ENCODE measurements at regions of chr21 and their contacts with region 1.

Region 1: DNA sequence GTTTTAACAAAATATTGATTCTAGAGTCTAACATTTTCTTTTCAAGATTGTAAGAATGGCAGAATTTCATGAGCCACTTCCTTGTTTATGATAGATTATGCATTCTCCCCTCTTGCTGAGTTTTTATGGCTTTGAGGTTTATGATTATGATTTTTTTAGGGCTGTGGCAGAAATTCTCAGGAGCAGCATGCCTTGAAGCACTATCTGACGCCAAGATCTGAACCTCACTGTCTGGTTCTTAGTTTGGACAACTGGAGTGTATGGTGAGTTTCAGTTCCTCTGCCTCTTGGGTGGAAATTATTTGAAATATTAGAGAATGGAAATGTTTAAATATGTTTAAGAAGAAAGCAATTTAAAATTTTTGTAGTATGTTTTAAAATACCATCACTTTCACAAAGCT is 10.2 kb downstream of the USP16 start:
- DNase-seq: no peak
- H3K4me3 ChIP-seq: no peak overlapping the region
- H3K27ac ChIP-seq: peak overlapping the region in 1 of 8 donors; percentile 4
- H3K4me1 ChIP-seq: peaks cover 0 to 18% (median 3%) of the 10 kb centered on the region in 6 donors
- H3K27me3 ChIP-seq: no peaks in the 10 kb centered on the region
- CTCF ChIP-seq: no peak
- POLR2A ChIP-seq: no peak

Region 2: DNA sequence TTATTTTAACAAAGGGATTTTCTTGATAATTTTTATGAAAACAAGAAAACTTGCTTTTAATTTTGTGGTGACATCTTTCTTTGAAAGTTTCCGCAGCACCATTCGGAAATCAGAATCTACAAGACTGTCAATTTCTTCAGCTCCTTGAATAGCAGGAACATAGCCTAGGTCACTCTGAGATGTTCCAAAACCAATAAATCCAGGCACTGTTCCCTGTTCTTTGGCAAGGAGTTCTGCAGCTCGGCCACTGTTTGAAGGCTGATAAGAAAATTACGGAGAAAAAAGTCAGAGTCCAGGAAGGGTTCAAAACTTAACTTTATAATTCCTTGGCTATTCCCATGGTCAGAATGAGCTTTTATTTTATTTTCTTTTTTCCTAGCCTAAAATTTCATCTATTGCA is 48.0 kb before region 1 on chr21:
- intact Hi-C with region 1: loop called (anchors 10 kb)
- DNase-seq: no peak
- H3K4me3 ChIP-seq: no peak overlapping the region
- H3K27ac ChIP-seq: no peak overlapping the region
- H3K4me1 ChIP-seq: peaks cover 12 to 35% (median 19%) of the 10 kb centered on the region in 6 donors
- H3K27me3 ChIP-seq: no peaks in the 10 kb centered on the region
- CTCF ChIP-seq: no peak
- POLR2A ChIP-seq: no peak

Region 3: DNA sequence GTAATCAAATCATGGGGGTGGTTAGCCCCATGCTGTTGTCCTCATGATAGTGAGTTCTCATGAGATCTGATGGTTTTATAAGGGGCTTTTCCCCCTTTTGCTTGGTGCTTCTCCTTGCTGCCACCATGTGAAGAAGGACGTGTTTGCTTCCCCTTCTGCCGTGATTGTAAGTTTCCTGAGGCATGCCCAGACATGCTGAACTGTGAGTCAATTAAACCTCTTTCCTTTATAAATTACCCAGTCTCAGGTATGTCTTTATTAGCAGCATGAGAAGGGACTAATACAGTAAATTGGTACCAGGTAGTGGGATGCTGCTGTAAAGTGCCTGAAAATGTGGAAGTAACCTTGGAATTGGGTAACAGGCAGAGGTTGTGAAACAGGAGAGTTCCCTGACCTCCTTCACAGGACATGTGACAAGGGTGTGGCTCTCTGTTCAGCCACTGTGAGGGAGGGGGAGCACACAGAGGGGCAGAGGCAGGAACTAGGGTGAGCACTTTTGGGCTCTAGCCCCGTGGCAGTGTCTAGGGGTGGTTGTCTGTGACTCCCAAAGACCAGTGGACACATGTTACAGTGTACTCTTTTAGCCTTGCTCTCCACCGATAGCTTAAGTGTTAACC is 369.4 kb after region 1 on chr21:
- intact Hi-C with region 1: no loop called
- DNase-seq: peak; percentile 77
- H3K4me3 ChIP-seq: no peak overlapping the region
- H3K27ac ChIP-seq: peak overlapping the region in 2 of 8 donors; percentile 49 to 76
- H3K4me1 ChIP-seq: peaks cover 0 to 5% (median 0%) of the 10 kb centered on the region in 6 donors
- H3K27me3 ChIP-seq: no peaks in the 10 kb centered on the region
- CTCF ChIP-seq: no peak
- POLR2A ChIP-seq: no peak

Measured in spleen (tissue), 13 donors.